Vagina (tissue), 2 donors: ENCODE measurements at regions of chr1 and their contacts with region 1.

Region 1: DNA sequence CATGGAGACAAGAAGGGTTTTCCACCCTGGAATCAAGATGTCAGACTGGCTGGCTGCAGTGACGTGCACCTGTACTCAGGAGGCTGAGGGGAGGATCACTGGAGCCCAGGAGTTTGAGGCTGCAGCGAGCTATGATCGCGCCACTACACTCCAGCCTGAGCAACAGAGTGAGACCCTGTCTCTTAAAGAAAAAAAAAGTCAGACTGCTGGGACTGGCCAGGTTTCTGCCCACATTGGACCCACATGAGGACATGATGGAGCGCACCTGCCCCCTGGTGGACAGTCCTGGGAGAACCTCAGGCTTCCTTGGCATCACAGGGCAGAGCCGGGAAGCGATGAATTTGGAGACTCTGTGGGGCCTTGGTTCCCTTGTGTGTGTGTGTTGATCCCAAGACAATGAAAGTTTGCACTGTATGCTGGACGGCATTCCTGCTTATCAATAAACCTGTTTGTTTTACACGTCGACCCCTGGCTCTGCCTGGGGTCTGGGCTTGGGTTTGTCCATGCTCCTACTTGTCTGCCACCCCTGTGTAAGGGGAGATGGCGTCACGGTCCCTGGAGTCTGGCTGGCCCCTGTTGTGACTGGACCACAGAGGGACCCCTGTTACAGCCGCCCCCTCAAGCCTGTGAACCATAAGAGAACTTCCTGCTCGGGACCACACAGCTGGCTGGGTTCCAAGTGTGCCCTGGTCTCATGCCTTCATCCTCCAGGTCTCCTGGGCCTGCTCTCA is 20.9 kb upstream of the VPS13D start:
- DNase-seq: no peak
- H3K4me3 ChIP-seq: no peak overlapping the region
- H3K27ac ChIP-seq: peak overlapping the region; percentile 62
- H3K4me1 ChIP-seq: peaks cover 19% of the 10 kb centered on the region
- H3K27me3 ChIP-seq: no peaks in the 10 kb centered on the region
- CTCF ChIP-seq: peak; percentile 97 to 99 (median 99)
- POLR2A ChIP-seq: no peak

Region 2: DNA sequence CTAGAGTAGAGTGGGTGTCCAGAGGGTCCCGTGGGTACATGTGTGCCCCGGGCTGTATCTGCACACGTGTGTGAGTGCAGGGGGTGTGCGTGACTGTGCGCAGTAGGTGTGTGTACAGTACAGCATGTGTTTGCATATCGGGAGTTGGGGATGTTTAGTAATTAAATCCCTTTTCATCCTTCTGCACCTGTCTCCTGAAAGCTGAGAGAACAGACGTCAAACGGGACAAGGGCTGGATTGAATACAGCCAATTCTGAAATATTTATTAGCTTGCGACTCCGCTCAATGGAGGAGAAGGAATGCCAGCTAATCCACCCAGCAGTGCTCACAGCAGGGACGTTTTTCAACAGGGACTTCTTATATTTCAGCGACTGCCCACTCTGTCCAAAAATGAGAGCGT is 1367.8 kb before region 1 on chr1:
- intact Hi-C with region 1: loop called (anchors 5 kb)
- DNase-seq: no peak
- H3K4me3 ChIP-seq: no peak overlapping the region
- H3K27ac ChIP-seq: no peak overlapping the region
- H3K4me1 ChIP-seq: no peaks in the 10 kb centered on the region
- H3K27me3 ChIP-seq: no peaks in the 10 kb centered on the region
- CTCF ChIP-seq: no peak
- POLR2A ChIP-seq: no peak

Region 3: GRCh38 chr1:12124693-12125421 is 84.1 kb before region 1 on chr1:
- intact Hi-C with region 1: loop called (anchors 2 kb)
- DNase-seq: no peak
- H3K4me3 ChIP-seq: no peak overlapping the region
- H3K27ac ChIP-seq: peak overlapping the region; percentile 53
- H3K4me1 ChIP-seq: peaks cover 19% of the 10 kb centered on the region
- H3K27me3 ChIP-seq: no peaks in the 10 kb centered on the region
- CTCF ChIP-seq: peak; percentile 87 to 99 (median 97)
- POLR2A ChIP-seq: no peak

Region 4: GRCh38 chr1:12166834-12167492 is 42.0 kb before region 1 on chr1 and contains the start of gene TNFRSF1B:
- intact Hi-C with region 1: no loop called
- DNase-seq: no peak
- H3K4me3 ChIP-seq: peak within 1 kb of the TSS; percentile 67 to 81
- H3K27ac ChIP-seq: peak within 1 kb of the TSS; percentile 90
- H3K4me1 ChIP-seq: peaks cover 50% of the 10 kb centered on the region
- H3K27me3 ChIP-seq: no peaks in the 10 kb centered on the region
- CTCF ChIP-seq: no peak
- POLR2A ChIP-seq: peak in 1 of 2 donors; percentile 85
- total RNA-seq, gene TNFRSF1B: 41.0 TPM

Region 5: DNA sequence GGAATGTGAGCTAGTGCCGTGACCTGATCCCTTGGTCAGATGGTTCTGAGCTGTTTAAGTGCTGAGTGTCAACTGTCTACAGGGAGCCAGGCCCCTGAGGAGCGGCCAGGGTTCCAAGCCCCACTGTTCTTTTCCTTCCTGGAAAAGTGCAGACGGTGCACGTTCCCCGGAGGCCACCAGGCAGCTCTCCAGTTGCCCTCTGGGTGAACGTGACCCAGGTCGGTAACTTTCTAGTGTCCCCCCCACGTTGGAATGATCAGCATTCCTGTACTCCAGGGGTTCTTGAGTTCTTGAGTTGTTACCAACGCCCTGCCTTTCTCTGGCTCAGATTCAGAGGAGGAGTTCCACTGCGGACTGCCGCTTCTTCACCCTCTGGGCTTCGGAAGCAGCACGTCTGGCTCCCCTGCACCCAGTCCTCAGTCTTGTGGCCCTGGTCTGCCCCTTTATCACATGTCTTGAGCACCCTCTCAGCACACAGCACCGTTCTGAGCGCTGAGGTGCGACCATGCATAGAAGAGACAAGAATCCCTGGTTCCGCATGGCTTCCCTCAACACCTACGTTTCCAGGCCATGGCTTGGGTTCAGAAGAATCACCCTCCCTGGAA is 277.6 kb after region 1 on chr1:
- intact Hi-C with region 1: no loop called
- DNase-seq: peak in 1 of 2 donors; percentile 88
- H3K4me3 ChIP-seq: no peak overlapping the region
- H3K27ac ChIP-seq: peak overlapping the region; percentile 62
- H3K4me1 ChIP-seq: peaks cover 34% of the 10 kb centered on the region
- H3K27me3 ChIP-seq: no peaks in the 10 kb centered on the region
- CTCF ChIP-seq: no peak
- POLR2A ChIP-seq: no peak